CD8-positive, alpha-beta T cell (primary cell): ENCODE measurements at regions of chr12 and their contacts with region 1.

Region 1: GRCh38 chr12:8823565-8824300 is 1.3 kb downstream of the A2ML1 start:
- DNase-seq: peak in 2 of 9 experiments; percentile 13 to 29
- ATAC-seq: no peak
- H3K4me3 ChIP-seq: no peak overlapping the region
- H3K4me3 Mint-ChIP-seq: no peak overlapping the region
- H3K27ac ChIP-seq: no peak overlapping the region
- H3K27ac Mint-ChIP-seq: no peak overlapping the region
- H3K4me1 ChIP-seq: no peaks in the 10 kb centered on the region
- H3K4me1 Mint-ChIP-seq: no peaks in the 10 kb centered on the region
- H3K27me3 ChIP-seq: no peaks in the 10 kb centered on the region
- H3K27me3 Mint-ChIP-seq: peaks cover 4% of the 10 kb centered on the region
- CTCF ChIP-seq: no peak

Region 2: DNA sequence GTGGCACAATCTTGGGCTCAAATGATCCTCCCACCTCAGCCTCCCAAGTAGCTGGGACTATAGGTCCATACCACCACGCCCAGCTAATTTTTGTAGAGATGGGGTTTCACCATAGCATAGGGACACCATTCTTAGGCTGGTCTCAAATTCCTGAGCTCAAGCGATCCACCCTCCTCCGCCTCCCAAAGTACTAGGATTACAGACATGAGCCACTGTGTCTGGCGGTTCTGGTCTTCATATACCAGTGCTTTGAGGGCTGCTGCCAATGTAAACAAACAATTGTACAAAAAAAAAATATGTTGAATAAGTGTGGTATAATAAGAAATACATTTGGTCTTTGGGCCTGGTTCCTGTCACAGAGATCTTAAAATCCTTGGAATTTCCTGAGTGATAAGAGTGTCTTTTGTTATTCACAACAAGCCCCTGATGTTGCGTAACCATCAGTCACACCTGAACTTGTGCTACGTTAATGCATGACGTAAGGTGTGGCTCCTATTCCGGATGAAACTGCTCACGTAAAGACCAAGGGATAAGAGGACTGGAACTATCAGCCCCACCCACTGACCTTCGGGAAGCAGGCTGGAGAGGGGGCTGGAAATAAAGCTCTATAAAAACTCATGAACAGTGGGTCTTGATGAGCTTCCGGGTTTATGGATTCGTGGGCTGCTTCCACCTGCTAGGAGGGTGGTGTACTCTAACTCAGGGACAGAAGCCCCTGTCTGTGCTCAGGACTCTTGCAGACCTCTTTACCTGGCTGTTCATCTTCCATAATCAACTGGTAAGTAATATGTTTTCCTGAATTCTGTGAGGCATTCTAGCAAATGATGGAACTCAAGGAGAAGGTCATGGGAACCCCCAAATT is 142.5 kb before region 1 on chr12:
- CTCF ChIA-PET with region 1: interaction called, 4 read pairs
- POLR2A ChIA-PET with region 1: interaction called, 3 read pairs
- intact Hi-C with region 1: loop called in 1 of 2 experiments (anchors 1 kb)
- DNase-seq: no peak
- ATAC-seq: no peak
- H3K4me3 ChIP-seq: no peak overlapping the region
- H3K4me3 Mint-ChIP-seq: no peak overlapping the region
- H3K27ac ChIP-seq: no peak overlapping the region
- H3K27ac Mint-ChIP-seq: no peak overlapping the region
- H3K4me1 ChIP-seq: no peaks in the 10 kb centered on the region
- H3K4me1 Mint-ChIP-seq: peaks cover 10% of the 10 kb centered on the region
- H3K27me3 ChIP-seq: no peaks in the 10 kb centered on the region
- H3K27me3 Mint-ChIP-seq: peaks cover 2% of the 10 kb centered on the region
- CTCF ChIP-seq: no peak